ENCODE measurements at regions of chr22 and their contacts with region 1.

Region 1: GRCh38 chr22:24106385-24107381 is 74.6 kb upstream of the SUSD2 start:
- DNase-seq: no peak
- H3K4me3 Mint-ChIP-seq: no peak overlapping the region
- H3K27ac Mint-ChIP-seq: peak overlapping the region; percentile 75
- H3K4me1 Mint-ChIP-seq: peaks cover 32% of the 10 kb centered on the region
- H3K27me3 Mint-ChIP-seq: no peaks in the 10 kb centered on the region

Region 2: DNA sequence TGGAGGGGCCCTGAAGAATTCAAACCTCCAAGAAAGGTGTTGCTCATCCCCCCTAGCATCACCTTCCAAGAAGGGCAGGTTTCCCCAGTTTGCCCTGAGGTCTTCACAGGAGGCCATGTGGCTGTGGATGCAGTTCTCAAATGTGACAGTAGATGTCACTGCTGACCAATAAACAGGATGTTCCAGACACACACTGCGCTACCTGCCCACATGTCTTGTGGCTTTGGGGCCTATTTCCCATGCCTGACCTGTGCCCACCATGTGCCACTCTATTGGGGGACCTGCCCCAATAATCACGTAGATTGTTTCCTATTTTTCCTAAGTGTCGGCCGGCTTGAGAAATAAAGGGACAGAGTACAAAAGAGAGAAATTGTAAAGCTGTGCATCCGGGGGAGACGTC is 122.3 kb before region 1 on chr22:
- intact Hi-C with region 1: loop called (anchors 10 kb)
- DNase-seq: peak; percentile 46
- H3K4me3 Mint-ChIP-seq: no peak overlapping the region
- H3K27ac Mint-ChIP-seq: no peak overlapping the region
- H3K4me1 Mint-ChIP-seq: peaks cover 8% of the 10 kb centered on the region
- H3K27me3 Mint-ChIP-seq: peaks cover 5% of the 10 kb centered on the region

Region 3: DNA sequence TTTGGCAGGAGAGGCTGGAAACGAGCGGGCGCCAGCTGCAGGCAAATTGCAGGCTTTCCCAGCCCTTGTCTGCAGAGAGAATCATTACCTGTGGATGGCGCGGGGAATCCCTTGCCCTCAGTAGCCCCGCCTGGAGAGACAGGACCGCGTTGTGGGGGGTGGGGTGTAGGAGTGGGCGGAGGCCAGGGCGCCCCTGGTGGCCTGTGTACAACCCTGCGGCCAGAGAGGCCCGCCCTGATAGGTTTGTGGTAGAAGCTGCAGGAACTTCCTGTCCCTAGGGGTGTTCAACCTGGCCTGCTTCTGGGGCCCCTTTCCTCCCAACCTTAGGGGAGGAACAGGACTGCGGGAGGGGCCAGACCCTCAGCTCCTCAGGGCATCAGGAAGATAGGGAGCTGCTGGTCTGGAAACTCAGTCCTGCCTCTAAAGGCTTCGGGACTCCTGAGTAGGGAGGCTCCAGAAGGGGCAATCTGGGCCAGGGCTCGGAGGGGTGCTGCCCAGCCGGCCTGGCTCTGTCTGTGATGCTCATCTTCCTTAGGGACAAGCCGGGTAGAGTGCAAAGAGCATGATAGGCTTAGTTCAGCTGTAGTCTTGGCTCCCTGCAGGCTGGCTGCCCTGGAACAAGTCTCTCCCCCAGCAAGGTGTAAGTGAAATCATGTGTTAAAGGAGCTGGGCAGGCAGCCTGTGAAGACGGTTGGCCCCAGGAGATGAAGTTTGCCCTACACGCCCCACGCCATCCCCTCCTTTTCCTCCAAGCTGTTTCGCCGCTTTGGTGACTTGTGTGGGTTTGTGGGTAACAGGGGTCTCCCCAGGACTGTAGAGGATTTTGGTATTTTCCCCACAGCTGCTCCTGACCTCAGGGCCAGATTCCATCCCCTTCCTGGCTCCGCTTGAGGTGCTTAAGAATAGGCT is 50.5 kb after region 1 on chr22:
- intact Hi-C with region 1: loop called (anchors 1 kb)
- DNase-seq: peak; percentile 87
- H3K4me3 Mint-ChIP-seq: peak overlapping the region; percentile 85
- H3K27ac Mint-ChIP-seq: peak overlapping the region; percentile 86
- H3K4me1 Mint-ChIP-seq: peaks cover 45% of the 10 kb centered on the region
- H3K27me3 Mint-ChIP-seq: no peaks in the 10 kb centered on the region

Measured in activated T-helper 2 cell treated with anti-CD3 and anti-CD28 coated beads, Interferon-gamma antibody, Interleukin-2, Interleukin-4, amounts not matched to agents 10 μg/mL and 5 μg/mL and 100 μg/mL, durations not matched to agents 14 hours and 24 hours and 36 hours (primary cell).